ENCODE measurements at regions of chr20 and their contacts with region 1.

Region 1: GRCh38 chr20:44747166-44748004 is 1.7 kb downstream of the KCNK15 start:
- DNase-seq: peak; percentile 83 to 95
- H3K4me3 ChIP-seq: no peak overlapping the region
- H3K27ac ChIP-seq: no peak overlapping the region
- H3K4me1 ChIP-seq: peaks cover 0 to 10% (median 3%) of the 10 kb centered on the region in 4 experiments; a peak in 5 of 7 replicates
- H3K27me3 ChIP-seq: peaks cover 2 to 39% (median 25%) of the 10 kb centered on the region in 4 experiments
- CTCF ChIP-seq: peak; percentile 73 to 88 (median 84)
- EP300 ChIP-seq: no peak
- POLR2A ChIP-seq: no peak
- RAD21 ChIP-seq: peak; percentile 83 to 84

Region 2: GRCh38 chr20:44629542-44629941 is 117.8 kb before region 1 on chr20:
- CTCF ChIA-PET with region 1: no interaction called
- POLR2A ChIA-PET with region 1: no interaction called
- DNase-seq: no peak
- H3K4me3 ChIP-seq: no peak overlapping the region
- H3K27ac ChIP-seq: no peak overlapping the region
- H3K4me1 ChIP-seq: peaks cover 0 to 3% (median 0%) of the 10 kb centered on the region in 4 experiments; a peak in 3 of 7 replicates
- H3K27me3 ChIP-seq: no peaks in the 10 kb centered on the region
- CTCF ChIP-seq: no peak
- EP300 ChIP-seq: no peak
- POLR2A ChIP-seq: no peak
- RAD21 ChIP-seq: no peak

Region 3: GRCh38 chr20:44666066-44666465 is 81.3 kb before region 1 on chr20:
- CTCF ChIA-PET with region 1: no interaction called
- POLR2A ChIA-PET with region 1: no interaction called
- DNase-seq: no peak
- H3K4me3 ChIP-seq: no peak overlapping the region
- H3K27ac ChIP-seq: no peak overlapping the region
- H3K4me1 ChIP-seq: 0 out of 7 replicates have a peak, but pooled peaks cover 0 to 3% (median 0%) of the 10 kb centered on the region in 4 experiments
- H3K27me3 ChIP-seq: no peaks in the 10 kb centered on the region; a peak in 1 of 7 replicates
- CTCF ChIP-seq: no peak
- EP300 ChIP-seq: no peak
- POLR2A ChIP-seq: no peak
- RAD21 ChIP-seq: no peak

Region 4: DNA sequence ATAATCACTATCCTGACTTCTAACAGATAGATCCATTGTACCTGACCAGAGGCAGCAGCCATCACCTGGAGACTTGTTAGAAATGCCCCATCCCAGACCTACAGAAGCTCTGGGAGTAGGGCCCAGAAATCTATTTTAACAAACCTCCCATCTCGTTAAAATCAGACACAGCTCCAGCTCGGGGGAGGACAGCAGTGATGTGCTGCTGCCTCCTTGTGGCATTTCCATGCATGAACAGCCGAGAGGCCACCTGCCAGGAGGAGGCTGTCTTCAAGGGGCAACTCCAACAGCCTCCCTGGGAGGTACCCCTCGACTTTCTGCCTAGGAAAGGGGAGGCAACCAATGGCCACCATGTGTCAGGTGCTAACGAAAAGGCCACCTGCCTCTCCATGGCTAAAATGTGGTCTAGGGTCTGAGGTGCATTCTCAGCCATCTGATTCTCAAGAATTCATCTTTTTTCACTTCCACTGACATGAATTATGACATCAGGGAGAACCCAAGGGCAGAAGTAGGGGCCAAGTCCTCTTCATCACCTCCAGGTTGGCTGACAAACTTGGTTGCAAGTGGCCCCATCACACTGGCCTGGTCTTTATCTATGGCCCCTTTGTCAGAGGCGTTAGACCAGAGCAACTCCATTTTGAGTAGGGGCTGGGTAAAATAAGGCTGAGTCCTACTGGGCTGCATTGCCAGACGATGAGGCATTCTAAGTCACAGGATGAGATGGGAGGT is 13.9 kb before region 1 on chr20:
- CTCF ChIA-PET with region 1: interaction called, 26 read pairs
- POLR2A ChIA-PET with region 1: interaction called, 5 read pairs
- DNase-seq: peak in 1 of 2 experiments; percentile 86
- H3K4me3 ChIP-seq: no peak overlapping the region
- H3K27ac ChIP-seq: no peak overlapping the region
- H3K4me1 ChIP-seq: peaks cover 3 to 13% (median 9%) of the 10 kb centered on the region in 4 experiments; a peak in 4 of 7 replicates
- H3K27me3 ChIP-seq: no peaks in the 10 kb centered on the region
- CTCF ChIP-seq: peak; percentile 90 to 97 (median 96)
- EP300 ChIP-seq: no peak
- POLR2A ChIP-seq: no peak
- RAD21 ChIP-seq: peak; percentile 98 to 99

Region 5: DNA sequence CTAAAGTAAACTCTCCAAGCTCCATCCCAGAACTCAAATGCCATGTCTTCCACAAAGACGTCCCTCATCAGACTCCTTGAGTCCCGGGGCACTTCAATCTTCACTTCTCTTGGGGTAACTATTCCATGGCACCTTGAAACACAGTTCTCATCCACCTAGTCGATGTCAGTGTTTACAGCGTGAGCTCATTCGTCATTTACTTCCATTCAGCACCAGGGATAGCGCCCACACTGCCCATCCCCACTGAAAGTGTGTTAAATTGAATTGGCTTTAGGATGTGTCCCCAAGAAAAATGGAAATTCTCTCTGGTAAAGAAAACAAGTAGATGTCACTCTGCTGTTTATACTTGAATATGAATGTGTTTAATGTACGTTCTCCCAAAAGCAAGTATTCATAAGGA is 29.6 kb after region 1 on chr20:
- CTCF ChIA-PET with region 1: interaction called, 55 read pairs
- POLR2A ChIA-PET with region 1: interaction called, 3 read pairs
- DNase-seq: peak in 1 of 2 experiments; percentile 67
- H3K4me3 ChIP-seq: no peak overlapping the region
- H3K27ac ChIP-seq: no peak overlapping the region
- H3K4me1 ChIP-seq: peaks cover 0 to 2% (median 0%) of the 10 kb centered on the region in 4 experiments; a peak in 1 of 7 replicates
- H3K27me3 ChIP-seq: no peaks in the 10 kb centered on the region
- CTCF ChIP-seq: no peak
- EP300 ChIP-seq: no peak
- POLR2A ChIP-seq: no peak
- RAD21 ChIP-seq: no peak

Region 6: DNA sequence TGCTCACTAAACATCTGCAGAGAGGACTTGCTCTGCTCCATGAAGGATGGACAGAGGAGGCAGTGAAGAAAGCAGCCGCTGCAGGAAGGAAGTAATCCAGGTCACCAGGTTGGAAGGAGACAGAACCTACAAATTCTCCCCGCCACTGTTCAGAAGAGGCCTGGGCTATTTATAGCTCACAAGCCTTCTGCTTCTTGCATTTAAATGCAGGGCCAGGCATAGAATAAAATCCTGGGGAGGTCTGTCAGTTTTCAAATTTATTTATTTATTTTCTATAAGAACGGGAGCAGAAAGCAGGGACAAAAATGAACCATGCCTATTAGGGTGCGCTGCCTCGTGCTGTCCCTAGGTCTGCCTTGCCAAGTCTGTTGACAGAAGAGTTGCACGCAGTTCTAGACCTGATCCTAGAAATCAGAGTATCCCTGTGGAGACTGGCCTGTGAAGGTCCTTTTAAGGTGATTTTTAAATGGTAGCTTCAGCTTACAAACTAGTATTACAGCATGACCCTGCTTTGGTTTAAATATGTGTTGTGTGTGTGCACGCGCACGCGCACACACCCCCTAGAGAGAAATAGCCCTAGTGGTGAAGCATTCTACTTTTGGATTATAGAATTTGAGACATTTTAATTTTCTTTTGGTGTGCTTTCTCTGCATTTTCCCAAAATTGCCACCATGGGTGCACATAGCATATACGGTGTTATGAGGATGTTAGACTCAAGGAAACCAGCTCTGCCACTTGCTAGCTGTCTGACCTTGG is 43.4 kb after region 1 on chr20:
- CTCF ChIA-PET with region 1: interaction called, 55 read pairs
- POLR2A ChIA-PET with region 1: no interaction called
- DNase-seq: no peak
- H3K4me3 ChIP-seq: no peak overlapping the region
- H3K27ac ChIP-seq: no peak overlapping the region
- H3K4me1 ChIP-seq: peaks cover 1 to 12% (median 9%) of the 10 kb centered on the region in 4 experiments; a peak in 6 of 7 replicates
- H3K27me3 ChIP-seq: no peaks in the 10 kb centered on the region
- CTCF ChIP-seq: no peak
- EP300 ChIP-seq: no peak
- POLR2A ChIP-seq: no peak
- RAD21 ChIP-seq: no peak

Region 7: GRCh38 chr20:44819936-44820335 is 72.6 kb after region 1 on chr20:
- CTCF ChIA-PET with region 1: interaction called, 10 read pairs
- POLR2A ChIA-PET with region 1: no interaction called
- DNase-seq: no peak
- H3K4me3 ChIP-seq: no peak overlapping the region
- H3K27ac ChIP-seq: no peak overlapping the region
- H3K4me1 ChIP-seq: peaks cover 0 to 4% (median 1%) of the 10 kb centered on the region in 4 experiments; a peak in 1 of 7 replicates
- H3K27me3 ChIP-seq: no peaks in the 10 kb centered on the region
- CTCF ChIP-seq: no peak
- EP300 ChIP-seq: no peak
- POLR2A ChIP-seq: no peak
- RAD21 ChIP-seq: no peak

Region 8: GRCh38 chr20:44861531-44862006 is 114.2 kb after region 1 on chr20:
- CTCF ChIA-PET with region 1: interaction called, 97 read pairs
- POLR2A ChIA-PET with region 1: no interaction called
- DNase-seq: peak in 1 of 2 experiments; percentile 10
- H3K4me3 ChIP-seq: no peak overlapping the region
- H3K27ac ChIP-seq: no peak overlapping the region
- H3K4me1 ChIP-seq: no peaks in the 10 kb centered on the region
- H3K27me3 ChIP-seq: no peaks in the 10 kb centered on the region
- CTCF ChIP-seq: no peak
- EP300 ChIP-seq: no peak
- POLR2A ChIP-seq: no peak
- RAD21 ChIP-seq: no peak